Left colon (tissue), 2 donors: ENCODE measurements at regions of chr2 and their contacts with region 1.

Region 1: GRCh38 chr2:121356058-121356640 is 71.1 kb upstream of the TFCP2L1 start:
- DNase-seq: peak in 1 of 2 donors; percentile 38
- ATAC-seq: peak; percentile 69

Region 2: DNA sequence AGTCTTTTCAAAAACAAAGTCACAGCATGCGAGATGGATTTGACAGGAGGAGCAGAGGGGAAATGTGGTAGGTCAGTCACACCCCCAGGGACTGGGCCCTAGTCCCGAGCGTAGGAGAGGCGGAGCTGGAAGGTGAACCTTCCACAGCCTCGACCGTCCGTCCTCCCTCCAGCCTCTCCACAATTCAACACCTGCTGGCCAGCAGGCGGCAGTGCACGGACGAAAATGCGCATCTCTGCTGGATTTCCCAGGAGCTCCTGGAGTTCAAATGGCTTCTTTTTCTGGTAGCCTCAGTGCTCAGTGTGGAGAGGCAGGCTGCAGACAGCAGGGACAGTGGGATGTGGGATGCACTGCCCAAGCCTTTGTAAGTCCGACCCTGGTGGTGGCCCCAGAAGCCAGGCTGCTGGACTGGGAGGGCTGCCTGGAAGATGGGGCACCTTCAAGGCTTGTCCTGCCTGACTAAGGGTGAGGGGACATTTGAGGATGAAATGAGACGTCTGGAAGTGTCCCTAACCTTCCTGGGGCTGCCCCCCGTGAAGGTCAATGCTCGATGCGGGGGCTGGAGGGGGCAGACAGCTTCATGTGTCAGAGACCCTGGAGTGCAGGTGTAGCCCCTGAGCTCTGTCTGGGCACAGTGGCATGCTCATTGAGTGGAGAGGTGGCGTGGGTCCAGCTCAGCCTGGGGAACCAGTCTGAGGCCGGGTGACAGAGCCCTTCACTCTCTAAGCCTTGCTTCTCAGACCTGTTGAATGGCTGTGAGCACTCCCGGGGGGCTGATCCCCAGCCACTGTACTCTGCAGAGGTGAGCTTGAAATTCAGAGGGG is 260.7 kb before region 1 on chr2:
- intact Hi-C with region 1: loop called in 1 of 2 experiments (anchors 10 kb)
- DNase-seq: peak; percentile 74 to 83
- ATAC-seq: peak; percentile 78